ENCODE measurements at regions of chr12 and their contacts with region 1.

Region 1: DNA sequence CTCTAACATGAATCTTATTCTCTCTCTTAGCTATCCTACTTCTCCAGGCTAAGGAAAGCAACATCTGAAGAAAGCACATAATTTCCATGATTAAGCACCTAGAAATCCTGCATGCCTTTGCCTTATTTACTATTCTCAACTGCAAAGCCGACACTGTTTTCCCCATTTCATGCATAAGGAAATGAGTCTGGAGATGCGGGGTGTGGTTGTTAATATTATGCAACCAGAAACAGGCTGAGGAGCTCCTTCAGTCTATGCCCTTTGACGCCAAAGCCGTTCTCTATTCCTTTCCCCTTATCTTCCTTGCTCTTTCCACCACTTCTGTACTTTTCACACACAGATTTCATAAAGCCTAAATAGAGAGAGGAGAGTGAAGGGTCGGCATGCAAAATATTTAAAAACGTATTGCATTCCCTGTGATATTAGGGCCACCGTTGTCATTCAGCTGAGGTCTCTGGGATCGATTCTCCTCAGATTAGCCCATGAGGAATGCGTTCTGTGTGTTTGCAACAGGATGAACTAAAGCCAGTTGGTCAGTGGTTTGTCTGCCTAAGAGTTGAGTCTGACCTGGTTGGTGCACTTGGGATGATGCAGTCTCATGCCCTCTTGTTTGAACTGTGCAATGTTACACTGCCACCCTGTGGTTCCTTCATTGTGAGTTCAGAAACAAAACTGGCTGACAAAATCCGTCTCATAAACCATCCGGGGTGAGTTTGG is 53.1 kb upstream of the PLEKHG7 start:
- DNase-seq: peak; percentile 40
- H3K4me3 Mint-ChIP-seq: no peak overlapping the region
- H3K27ac Mint-ChIP-seq: no peak overlapping the region
- H3K4me1 Mint-ChIP-seq: peaks cover 10% of the 10 kb centered on the region
- H3K27me3 Mint-ChIP-seq: no peaks in the 10 kb centered on the region

Region 2: DNA sequence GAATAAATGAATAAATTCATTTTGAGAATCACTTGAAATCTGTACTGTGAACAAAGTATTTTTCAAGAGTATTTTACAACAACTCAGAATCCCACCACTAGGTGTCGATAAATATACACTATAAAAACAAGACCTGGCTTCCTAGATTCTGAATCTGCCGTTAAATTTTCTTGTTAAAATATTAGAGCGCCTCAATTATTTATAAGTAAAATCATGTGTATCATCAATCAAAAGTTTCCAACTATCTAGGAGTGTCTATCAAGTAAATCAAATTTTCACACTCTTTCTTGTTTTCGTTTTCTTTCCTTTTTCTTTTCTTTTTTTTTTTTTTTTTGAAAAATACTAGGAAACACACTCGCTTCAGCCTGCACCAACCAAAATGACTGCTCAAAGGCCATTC is 1287.8 kb before region 1 on chr12:
- intact Hi-C with region 1: loop called (anchors 1 kb)
- DNase-seq: no peak
- H3K4me3 Mint-ChIP-seq: no peak overlapping the region
- H3K27ac Mint-ChIP-seq: no peak overlapping the region
- H3K4me1 Mint-ChIP-seq: peaks cover 5% of the 10 kb centered on the region
- H3K27me3 Mint-ChIP-seq: peaks cover 9% of the 10 kb centered on the region

Region 3: GRCh38 chr12:91382081-91382543 is 1267.6 kb before region 1 on chr12:
- intact Hi-C with region 1: loop called (anchors 1 kb)
- DNase-seq: peak; percentile 68
- H3K4me3 Mint-ChIP-seq: peak overlapping the region; percentile 76
- H3K27ac Mint-ChIP-seq: no peak overlapping the region
- H3K4me1 Mint-ChIP-seq: peaks cover 10% of the 10 kb centered on the region
- H3K27me3 Mint-ChIP-seq: peaks cover 5% of the 10 kb centered on the region

Region 4: GRCh38 chr12:91577586-91578539 is 1071.8 kb before region 1 on chr12:
- intact Hi-C with region 1: loop called (anchors 2 kb)
- DNase-seq: no peak
- H3K4me3 Mint-ChIP-seq: peak overlapping the region; percentile 62
- H3K27ac Mint-ChIP-seq: no peak overlapping the region
- H3K4me1 Mint-ChIP-seq: peaks cover 6% of the 10 kb centered on the region
- H3K27me3 Mint-ChIP-seq: peaks cover 15% of the 10 kb centered on the region

Region 5: DNA sequence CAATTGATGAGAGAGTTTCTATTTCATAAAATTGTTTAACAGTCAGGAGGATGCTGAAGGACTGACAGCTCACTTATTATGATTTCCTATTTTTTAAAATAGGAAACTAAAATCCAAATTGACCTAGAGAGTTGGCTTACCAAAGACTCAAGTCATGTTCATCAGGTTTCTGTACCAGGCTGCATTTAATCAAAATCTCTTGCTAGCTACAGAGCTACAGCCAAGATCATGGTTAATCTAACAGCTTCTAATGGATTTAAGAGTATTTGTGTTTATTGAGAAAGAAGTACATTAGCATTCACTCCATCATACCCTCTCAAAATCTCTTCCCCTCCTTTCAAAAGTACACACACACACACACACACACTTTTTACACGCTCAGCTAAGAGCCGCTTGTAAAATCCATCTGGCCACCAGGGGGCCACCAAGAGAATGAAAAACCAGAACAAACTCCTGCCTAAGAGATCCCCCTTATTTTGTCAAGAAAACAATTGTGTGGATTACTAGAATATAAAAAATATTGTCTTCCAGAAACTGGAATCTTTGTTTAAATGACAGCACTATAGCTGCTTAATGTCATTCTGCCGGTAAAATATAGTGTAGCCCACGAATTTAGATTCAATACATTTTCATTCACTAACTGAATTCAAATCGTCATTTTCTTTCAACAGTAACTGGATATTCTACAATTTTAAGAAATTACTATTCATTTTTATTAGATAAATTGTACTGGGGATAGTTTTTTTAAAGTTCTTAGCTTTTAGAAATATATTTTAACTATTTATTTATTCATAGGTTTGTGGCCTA is 838.0 kb before region 1 on chr12:
- intact Hi-C with region 1: loop called (anchors 1 kb)
- DNase-seq: peak; percentile 35
- H3K4me3 Mint-ChIP-seq: no peak overlapping the region
- H3K27ac Mint-ChIP-seq: no peak overlapping the region
- H3K4me1 Mint-ChIP-seq: peaks cover 10% of the 10 kb centered on the region
- H3K27me3 Mint-ChIP-seq: no peaks in the 10 kb centered on the region

Region 6: GRCh38 chr12:91991399-91992187 is 658.1 kb before region 1 on chr12:
- intact Hi-C with region 1: loop called (anchors 5 kb)
- DNase-seq: no peak
- H3K4me3 Mint-ChIP-seq: no peak overlapping the region
- H3K27ac Mint-ChIP-seq: no peak overlapping the region
- H3K4me1 Mint-ChIP-seq: peaks cover 4% of the 10 kb centered on the region
- H3K27me3 Mint-ChIP-seq: no peaks in the 10 kb centered on the region

Region 7: GRCh38 chr12:92593734-92594402 is 55.8 kb before region 1 on chr12:
- intact Hi-C with region 1: loop called (anchors 1 kb)
- DNase-seq: peak; percentile 79
- H3K4me3 Mint-ChIP-seq: peak overlapping the region; percentile 72
- H3K27ac Mint-ChIP-seq: peak overlapping the region; percentile 99
- H3K4me1 Mint-ChIP-seq: peaks cover 63% of the 10 kb centered on the region
- H3K27me3 Mint-ChIP-seq: no peaks in the 10 kb centered on the region

Region 8: DNA sequence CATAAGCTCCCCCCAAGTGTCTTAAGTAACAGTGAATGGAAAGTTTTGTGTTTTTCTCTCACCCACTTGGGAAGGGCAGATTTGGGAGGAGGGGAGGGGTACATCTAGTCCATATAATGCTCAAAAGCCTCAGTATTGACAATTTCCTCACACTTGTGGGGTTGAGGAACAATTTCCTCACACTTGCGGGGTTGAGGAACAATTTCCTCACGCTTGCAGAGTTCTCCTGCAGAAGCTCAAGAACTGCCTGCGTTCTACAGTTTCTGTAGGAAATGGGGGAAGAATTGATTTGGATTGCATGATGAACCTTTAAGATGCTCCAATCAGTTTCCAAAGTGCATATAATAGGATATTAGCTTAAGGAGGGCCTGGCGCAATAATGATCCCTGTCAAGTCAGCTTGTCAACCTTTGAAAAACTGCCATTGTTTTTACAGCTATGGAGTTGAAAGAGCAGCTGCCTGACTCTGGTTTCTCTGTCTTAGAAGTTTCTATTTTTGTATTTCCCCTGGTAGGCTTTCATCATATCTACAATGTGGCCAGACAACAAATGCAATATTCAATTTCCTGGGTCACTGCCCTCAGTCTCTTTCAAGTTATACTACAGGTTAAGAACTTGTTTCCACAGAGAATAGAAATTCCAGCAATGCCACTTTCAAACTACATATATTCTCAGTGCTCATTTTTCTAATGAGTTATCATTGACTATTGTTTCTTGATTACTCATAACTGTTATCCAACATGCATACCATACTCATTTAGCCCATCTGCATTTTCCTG is 119.6 kb after region 1 on chr12:
- intact Hi-C with region 1: no loop called
- DNase-seq: no peak
- H3K4me3 Mint-ChIP-seq: no peak overlapping the region
- H3K27ac Mint-ChIP-seq: no peak overlapping the region
- H3K4me1 Mint-ChIP-seq: peaks cover 11% of the 10 kb centered on the region
- H3K27me3 Mint-ChIP-seq: no peaks in the 10 kb centered on the region

Region 9: GRCh38 chr12:92899388-92900001 is 249.8 kb after region 1 on chr12:
- intact Hi-C with region 1: no loop called
- DNase-seq: no peak
- H3K4me3 Mint-ChIP-seq: no peak overlapping the region
- H3K27ac Mint-ChIP-seq: no peak overlapping the region
- H3K4me1 Mint-ChIP-seq: peaks cover 14% of the 10 kb centered on the region
- H3K27me3 Mint-ChIP-seq: no peaks in the 10 kb centered on the region

Measured in activated T-helper 1 cell treated with anti-CD3 and anti-CD28 coated beads, Interleukin-12 subunit alpha, Interleukin-12 subunit beta, Interleukin-2, Interleukin-4 antibody, amounts not matched to agents 30 ng/mL and 10 ng/mL and 1 ng/mL, durations not matched to agents 14 hours and 24 hours and 36 hours (primary cell).